ENCODE measurements at regions of chr5 and their contacts with region 1.

Region 1: DNA sequence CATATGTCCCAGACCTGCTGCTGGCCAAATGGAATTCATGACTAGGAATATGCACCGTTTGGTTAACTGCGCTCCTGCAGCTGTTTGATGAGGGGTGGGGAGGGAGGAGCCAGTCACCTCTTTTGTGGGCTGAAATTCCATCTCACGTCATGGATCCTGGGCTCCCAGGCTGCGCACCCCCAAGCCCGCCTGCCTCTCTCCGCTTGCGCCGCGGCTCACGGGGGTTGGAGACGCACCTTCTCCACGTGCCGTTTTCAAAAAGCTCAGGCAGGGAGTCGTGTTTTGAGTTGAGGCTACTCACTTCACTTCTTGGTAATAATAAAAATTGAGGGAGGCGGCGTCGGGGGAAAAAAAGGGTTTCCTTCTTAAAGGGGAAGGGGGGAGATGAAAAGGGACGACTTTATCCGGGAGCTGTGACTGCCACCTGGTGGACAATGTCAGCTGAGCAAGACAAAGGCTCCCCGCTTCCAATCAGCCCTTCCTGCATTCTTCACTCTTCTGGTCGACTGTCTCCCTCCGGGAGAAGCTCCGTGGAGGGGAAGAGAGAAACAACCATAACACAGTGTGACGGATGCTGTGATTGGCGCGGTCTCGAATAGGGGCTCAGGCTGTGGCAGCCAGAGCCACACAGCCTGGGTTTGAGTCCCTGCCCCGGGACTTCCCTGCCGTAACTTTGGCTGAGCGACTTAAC is 15.9 kb upstream of the C5orf47 start:
- DNase-seq: peak; percentile 51 to 76 (median 71)
- ATAC-seq: peak; percentile 91
- H3K4me3 ChIP-seq: peak overlapping the region; percentile 38
- H3K4me3 Mint-ChIP-seq: peak overlapping the region; percentile 70 to 89 (median 84)
- H3K27ac ChIP-seq: no peak overlapping the region
- H3K27ac Mint-ChIP-seq: peak overlapping the region in 5 of 9 donors; percentile 33 to 60 (median 50)
- H3K4me1 ChIP-seq: peaks cover 4 to 6% of the 10 kb centered on the region in 2 donors
- H3K4me1 Mint-ChIP-seq: peaks cover 0 to 13% (median 10%) of the 10 kb centered on the region in 7 donors
- H3K27me3 ChIP-seq: no peaks in the 10 kb centered on the region
- H3K27me3 Mint-ChIP-seq: peaks cover 5 to 33% (median 8%) of the 10 kb centered on the region in 5 donors

Region 2: GRCh38 chr5:173592050-173592669 is 380.9 kb before region 1 on chr5:
- CTCF ChIA-PET with region 1: no interaction called
- POLR2A ChIA-PET with region 1: no interaction called
- intact Hi-C with region 1: loop called in 1 of 2 experiments (anchors 1 kb)
- DNase-seq: peak in 1 of 9 donors; percentile 11
- ATAC-seq: no peak
- H3K4me3 ChIP-seq: no peak overlapping the region
- H3K4me3 Mint-ChIP-seq: no peak overlapping the region
- H3K27ac ChIP-seq: no peak overlapping the region
- H3K27ac Mint-ChIP-seq: peak overlapping the region in 1 of 9 donors; percentile 63
- H3K4me1 ChIP-seq: no peaks in the 10 kb centered on the region
- H3K4me1 Mint-ChIP-seq: no peaks in the 10 kb centered on the region
- H3K27me3 ChIP-seq: no peaks in the 10 kb centered on the region
- H3K27me3 Mint-ChIP-seq: no peaks in the 10 kb centered on the region

Region 3: GRCh38 chr5:174148721-174149120 is 175.7 kb after region 1 on chr5:
- CTCF ChIA-PET with region 1: no interaction called
- POLR2A ChIA-PET with region 1: no interaction called
- intact Hi-C with region 1: no loop called
- DNase-seq: no peak
- ATAC-seq: no peak
- H3K4me3 ChIP-seq: no peak overlapping the region
- H3K4me3 Mint-ChIP-seq: no peak overlapping the region
- H3K27ac ChIP-seq: no peak overlapping the region
- H3K27ac Mint-ChIP-seq: no peak overlapping the region
- H3K4me1 ChIP-seq: no peaks in the 10 kb centered on the region
- H3K4me1 Mint-ChIP-seq: no peaks in the 10 kb centered on the region
- H3K27me3 ChIP-seq: no peaks in the 10 kb centered on the region
- H3K27me3 Mint-ChIP-seq: peaks cover 0 to 24% (median 14%) of the 10 kb centered on the region in 5 donors

Region 4: DNA sequence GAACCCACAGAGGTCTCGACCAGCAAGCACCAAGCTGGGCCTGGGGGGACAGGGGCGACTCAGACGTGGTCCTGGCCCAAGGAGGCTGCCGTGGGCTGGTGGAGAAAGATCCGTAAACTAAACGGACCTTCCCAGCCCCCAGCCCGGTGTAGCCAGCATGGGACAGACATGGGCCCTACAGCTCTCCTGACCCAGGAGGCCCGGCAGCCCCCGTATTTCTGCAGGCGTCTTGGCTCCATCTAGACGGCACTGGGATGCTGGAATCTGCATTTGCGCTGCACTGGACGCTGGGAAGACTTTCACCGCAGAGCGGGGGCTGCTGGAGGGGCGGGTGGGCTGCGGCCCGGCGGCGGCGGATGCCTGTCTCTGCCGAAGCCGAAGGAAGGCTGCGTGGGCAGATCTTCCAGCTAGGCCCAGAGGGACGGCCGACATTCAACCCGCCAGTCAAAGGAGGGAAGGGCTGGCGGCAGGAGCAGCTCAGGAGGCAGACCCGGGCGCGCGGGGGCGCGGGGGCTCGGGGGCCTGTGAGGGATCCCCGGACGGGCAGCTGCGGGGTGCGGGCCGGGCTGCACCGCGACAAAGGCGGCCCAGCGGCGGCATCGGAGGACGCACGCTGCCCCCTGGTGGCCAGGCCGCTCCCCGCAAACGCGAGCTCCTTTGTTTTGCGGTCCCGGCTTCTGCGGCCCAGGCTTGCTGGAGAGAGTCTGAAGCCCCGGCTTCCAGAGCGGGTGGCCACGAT is 338.6 kb after region 1 on chr5:
- CTCF ChIA-PET with region 1: no interaction called
- POLR2A ChIA-PET with region 1: no interaction called
- intact Hi-C with region 1: loop called in 1 of 2 experiments (anchors 5 kb)
- DNase-seq: peak; percentile 13 to 75 (median 50)
- ATAC-seq: peak; percentile 67
- H3K4me3 ChIP-seq: no peak overlapping the region
- H3K4me3 Mint-ChIP-seq: peak overlapping the region in 4 of 10 donors; percentile 13 to 55 (median 24)
- H3K27ac ChIP-seq: no peak overlapping the region
- H3K27ac Mint-ChIP-seq: no peak overlapping the region
- H3K4me1 ChIP-seq: no peaks in the 10 kb centered on the region
- H3K4me1 Mint-ChIP-seq: peaks cover 0 to 7% (median 0%) of the 10 kb centered on the region in 7 donors
- H3K27me3 ChIP-seq: peaks cover 0 to 6% of the 10 kb centered on the region in 2 donors
- H3K27me3 Mint-ChIP-seq: peaks cover 16 to 76% (median 46%) of the 10 kb centered on the region in 5 donors

Region 5: DNA sequence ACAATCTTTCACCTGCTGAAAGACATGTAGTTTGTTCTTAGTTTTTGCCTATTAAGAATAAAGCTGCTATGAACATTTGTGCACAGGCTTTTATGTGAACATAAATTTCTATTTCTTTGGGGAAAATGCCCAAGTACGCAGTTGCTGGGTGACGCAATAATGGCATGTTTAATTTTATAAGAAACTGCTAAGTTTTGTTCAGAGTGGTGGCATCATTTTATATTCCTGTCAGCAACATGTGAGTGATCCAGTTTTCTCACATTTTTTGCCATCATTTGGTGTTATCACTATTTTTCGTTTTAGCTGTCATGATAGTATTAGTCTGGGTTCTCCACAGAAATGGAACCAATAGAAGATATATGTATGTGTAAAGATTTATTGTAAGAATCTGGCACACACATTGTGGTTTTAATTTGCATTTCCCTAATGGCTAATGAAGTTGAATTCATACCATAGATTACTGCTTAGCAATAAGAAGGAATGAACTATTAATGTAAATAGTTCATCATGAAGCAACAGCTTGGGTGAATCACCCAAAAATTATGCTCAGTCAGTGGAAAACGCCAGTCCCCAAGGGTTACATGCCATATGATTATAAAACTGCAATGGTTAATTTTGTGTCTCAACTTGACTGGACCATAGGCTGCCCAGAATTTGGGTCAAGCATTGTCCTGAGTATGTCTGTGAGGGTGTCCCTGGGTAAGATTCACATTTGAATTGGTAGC is 1110.0 kb after region 1 on chr5:
- CTCF ChIA-PET with region 1: no interaction called
- POLR2A ChIA-PET with region 1: no interaction called
- intact Hi-C with region 1: no loop called
- DNase-seq: no peak
- ATAC-seq: no peak
- H3K4me3 ChIP-seq: no peak overlapping the region
- H3K4me3 Mint-ChIP-seq: no peak overlapping the region
- H3K27ac ChIP-seq: no peak overlapping the region
- H3K27ac Mint-ChIP-seq: no peak overlapping the region
- H3K4me1 ChIP-seq: no peaks in the 10 kb centered on the region
- H3K4me1 Mint-ChIP-seq: no peaks in the 10 kb centered on the region
- H3K27me3 ChIP-seq: no peaks in the 10 kb centered on the region
- H3K27me3 Mint-ChIP-seq: peaks cover 2 to 9% (median 5%) of the 10 kb centered on the region in 5 donors